ENCODE measurements at regions of chr16 and their contacts with region 1.

Region 1: DNA sequence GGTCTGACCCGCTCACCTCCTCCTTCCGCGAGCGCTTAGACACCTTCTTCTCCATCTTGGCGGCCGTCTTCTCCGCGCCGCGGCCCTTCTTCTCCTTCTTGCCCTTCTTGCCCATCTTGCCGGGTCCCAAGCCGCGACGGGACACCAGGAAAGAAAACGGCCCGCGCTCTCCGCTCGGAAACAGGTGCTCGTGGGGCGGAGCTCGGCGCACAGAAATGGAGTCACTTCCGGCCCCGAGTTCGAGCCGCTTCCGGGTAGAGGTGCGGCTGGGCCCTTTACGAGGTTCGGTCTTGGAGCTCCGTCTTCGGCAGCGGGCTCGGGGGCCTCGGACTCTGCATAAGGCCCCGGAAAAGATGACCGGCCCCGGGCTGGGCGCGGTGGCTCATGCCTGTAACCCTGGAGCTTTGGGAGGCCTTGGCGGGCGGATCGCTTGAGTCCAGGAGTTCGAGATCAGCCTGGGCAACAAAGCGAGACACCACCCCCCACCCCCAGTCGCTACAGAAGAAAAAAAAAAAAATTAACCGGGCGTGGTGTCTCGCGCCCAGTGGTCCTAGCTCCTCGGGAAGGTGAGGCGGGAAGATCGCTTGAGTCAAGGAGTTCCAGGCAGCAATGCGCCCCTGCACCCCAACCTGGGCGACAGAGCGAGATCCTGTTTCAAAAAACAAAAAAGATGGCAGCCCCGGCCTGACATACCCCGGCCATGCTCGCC is at the start of gene KLHDC4:
- DNase-seq: peak; percentile 87
- ATAC-seq: peak; percentile 84
- H3K4me3 Mint-ChIP-seq: peak within 1 kb of the TSS; percentile 100
- H3K27ac Mint-ChIP-seq: peak within 1 kb of the TSS; percentile 98
- H3K4me1 Mint-ChIP-seq: peaks cover 31% of the 10 kb centered on the region
- H3K27me3 Mint-ChIP-seq: no peaks in the 10 kb centered on the region
- CTCF ChIP-seq: no peak
- total RNA-seq, gene KLHDC4: 70.1 and 87.0 TPM in 2 replicates

Region 2: DNA sequence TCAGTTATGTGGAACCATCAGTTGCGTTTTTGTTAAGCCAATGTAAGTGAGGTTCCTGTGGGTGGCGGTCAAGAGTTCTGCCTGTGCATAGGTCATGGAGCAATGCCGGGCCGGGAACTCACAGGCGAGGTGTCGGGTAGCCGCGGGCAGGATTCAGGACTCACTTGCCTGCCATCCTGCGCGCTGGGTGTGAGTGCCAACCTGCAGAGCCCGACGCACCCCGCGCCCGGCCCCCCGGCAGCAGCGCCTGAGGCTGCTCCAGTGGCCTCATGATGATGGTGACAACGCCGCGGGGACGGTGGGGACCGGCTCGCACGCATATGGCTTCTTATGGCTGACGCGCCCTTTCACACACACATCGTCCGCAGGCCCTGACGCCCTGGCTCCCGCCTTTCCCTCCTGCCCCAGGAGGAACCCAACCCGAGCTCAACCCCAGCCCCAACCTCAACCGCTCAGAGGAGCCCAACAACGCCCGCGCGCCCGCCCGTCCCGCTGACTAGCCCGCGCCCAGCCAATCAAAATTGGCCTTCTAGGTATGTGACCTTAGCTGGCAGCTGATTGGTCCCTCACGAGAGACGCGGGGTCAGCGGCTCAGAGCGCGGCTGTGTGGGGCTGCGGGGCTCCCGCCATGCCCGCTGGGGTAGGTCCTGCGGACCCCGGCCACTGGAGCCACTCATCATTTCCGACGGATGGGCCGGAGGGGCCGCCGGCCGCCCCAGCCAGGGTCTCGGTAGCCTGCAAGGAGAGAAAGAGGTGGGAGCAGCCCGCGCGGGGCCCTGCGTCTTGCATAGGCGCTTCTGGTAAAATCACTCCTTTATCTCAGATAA is 448.8 kb before region 1 on chr16 and contains the start of gene C16orf95:
- CTCF ChIA-PET with region 1: no interaction called
- POLR2A ChIA-PET with region 1: interaction called, 4 read pairs
- intact Hi-C with region 1: loop called (anchors 1 kb)
- DNase-seq: peak; percentile 95
- ATAC-seq: peak; percentile 91
- H3K4me3 Mint-ChIP-seq: peak within 1 kb of the TSS; percentile 94
- H3K27ac Mint-ChIP-seq: peak within 1 kb of the TSS; percentile 96
- H3K4me1 Mint-ChIP-seq: peaks cover 13% of the 10 kb centered on the region
- H3K27me3 Mint-ChIP-seq: no peaks in the 10 kb centered on the region
- CTCF ChIP-seq: no peak
- total RNA-seq, gene C16orf95: 1.7 and 2.1 TPM in 2 replicates

Region 3: GRCh38 chr16:87416826-87417527 is 349.0 kb before region 1 on chr16:
- CTCF ChIA-PET with region 1: interaction called, 14 read pairs
- POLR2A ChIA-PET with region 1: no interaction called
- intact Hi-C with region 1: loop called (anchors 2 kb)
- DNase-seq: no peak
- ATAC-seq: no peak
- H3K4me3 Mint-ChIP-seq: no peak overlapping the region
- H3K27ac Mint-ChIP-seq: no peak overlapping the region
- H3K4me1 Mint-ChIP-seq: no peaks in the 10 kb centered on the region
- H3K27me3 Mint-ChIP-seq: no peaks in the 10 kb centered on the region
- CTCF ChIP-seq: no peak

Region 4: DNA sequence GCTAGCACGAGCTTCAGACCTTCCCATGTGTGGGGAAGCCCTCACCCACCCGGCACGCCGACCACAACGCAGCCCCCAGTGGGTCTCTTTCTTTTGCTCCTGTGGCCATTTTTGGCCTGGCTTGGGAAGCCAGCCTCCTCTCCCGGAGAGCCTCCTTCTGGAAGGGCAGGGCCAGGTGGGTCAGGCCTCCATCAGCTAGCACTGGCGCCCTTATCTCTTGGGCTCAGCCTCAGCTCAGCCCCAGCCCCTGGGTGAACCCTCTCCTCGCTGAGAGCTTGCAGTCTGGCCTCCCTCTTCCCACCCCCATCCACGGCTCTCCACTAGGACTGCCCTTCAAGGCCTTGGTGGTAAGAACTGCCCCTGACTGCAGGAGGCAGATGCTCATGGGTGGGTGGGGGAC is 178.3 kb before region 1 on chr16:
- CTCF ChIA-PET with region 1: interaction called, 3 read pairs
- POLR2A ChIA-PET with region 1: no interaction called
- intact Hi-C with region 1: loop called (anchors 1 kb)
- DNase-seq: no peak
- ATAC-seq: no peak
- H3K4me3 Mint-ChIP-seq: no peak overlapping the region
- H3K27ac Mint-ChIP-seq: no peak overlapping the region
- H3K4me1 Mint-ChIP-seq: peaks cover 3% of the 10 kb centered on the region
- H3K27me3 Mint-ChIP-seq: peaks cover 28% of the 10 kb centered on the region
- CTCF ChIP-seq: no peak

Region 5: GRCh38 chr16:87702325-87702811 is 63.6 kb before region 1 on chr16:
- CTCF ChIA-PET with region 1: interaction called, 6 read pairs
- POLR2A ChIA-PET with region 1: interaction called, 12 read pairs
- intact Hi-C with region 1: loop called (anchors 5 kb)
- DNase-seq: peak; percentile 57
- ATAC-seq: peak; percentile 46
- H3K4me3 Mint-ChIP-seq: peak overlapping the region; percentile 57
- H3K27ac Mint-ChIP-seq: peak overlapping the region; percentile 82
- H3K4me1 Mint-ChIP-seq: peaks cover 58% of the 10 kb centered on the region
- H3K27me3 Mint-ChIP-seq: no peaks in the 10 kb centered on the region
- CTCF ChIP-seq: no peak

Region 6: GRCh38 chr16:87735270-87736007 is 30.5 kb before region 1 on chr16:
- CTCF ChIA-PET with region 1: no interaction called
- POLR2A ChIA-PET with region 1: no interaction called
- intact Hi-C with region 1: no loop called
- DNase-seq: no peak
- ATAC-seq: no peak
- H3K4me3 Mint-ChIP-seq: no peak overlapping the region
- H3K27ac Mint-ChIP-seq: no peak overlapping the region
- H3K4me1 Mint-ChIP-seq: no peaks in the 10 kb centered on the region
- H3K27me3 Mint-ChIP-seq: no peaks in the 10 kb centered on the region
- CTCF ChIP-seq: no peak

Region 7: GRCh38 chr16:87806603-87807546 is 40.9 kb after region 1 on chr16:
- CTCF ChIA-PET with region 1: interaction called, 3 read pairs
- POLR2A ChIA-PET with region 1: interaction called, 13 read pairs
- intact Hi-C with region 1: no loop called
- DNase-seq: peak; percentile 55
- ATAC-seq: peak; percentile 43
- H3K4me3 Mint-ChIP-seq: peak overlapping the region; percentile 75
- H3K27ac Mint-ChIP-seq: peak overlapping the region; percentile 95
- H3K4me1 Mint-ChIP-seq: peaks cover 74% of the 10 kb centered on the region
- H3K27me3 Mint-ChIP-seq: no peaks in the 10 kb centered on the region
- CTCF ChIP-seq: no peak